PC-3 (cell line): ENCODE measurements at regions of chr14 and their contacts with region 1.

Region 1: GRCh38 chr14:63770187-63770807 is 42.4 kb upstream of the SGPP1 start:
- DNase-seq: peak; percentile 79
- ATAC-seq: peak; percentile 99
- H3K4me3 ChIP-seq: no peak overlapping the region
- H3K27ac ChIP-seq: no peak overlapping the region
- H3K4me1 ChIP-seq: no peaks in the 10 kb centered on the region
- H3K27me3 ChIP-seq: no peaks in the 10 kb centered on the region
- CTCF ChIP-seq: peak; percentile 90

Region 2: GRCh38 chr14:63388763-63389431 is 381.4 kb before region 1 on chr14:
- CTCF ChIA-PET with region 1: interaction called, 4 read pairs
- POLR2A ChIA-PET with region 1: no interaction called
- intact Hi-C with region 1: loop called (anchors 1 kb)
- DNase-seq: peak; percentile 78
- ATAC-seq: peak; percentile 96
- H3K4me3 ChIP-seq: no peak overlapping the region
- H3K27ac ChIP-seq: no peak overlapping the region
- H3K4me1 ChIP-seq: no peaks in the 10 kb centered on the region
- H3K27me3 ChIP-seq: no peaks in the 10 kb centered on the region
- CTCF ChIP-seq: peak; percentile 98

Region 3: DNA sequence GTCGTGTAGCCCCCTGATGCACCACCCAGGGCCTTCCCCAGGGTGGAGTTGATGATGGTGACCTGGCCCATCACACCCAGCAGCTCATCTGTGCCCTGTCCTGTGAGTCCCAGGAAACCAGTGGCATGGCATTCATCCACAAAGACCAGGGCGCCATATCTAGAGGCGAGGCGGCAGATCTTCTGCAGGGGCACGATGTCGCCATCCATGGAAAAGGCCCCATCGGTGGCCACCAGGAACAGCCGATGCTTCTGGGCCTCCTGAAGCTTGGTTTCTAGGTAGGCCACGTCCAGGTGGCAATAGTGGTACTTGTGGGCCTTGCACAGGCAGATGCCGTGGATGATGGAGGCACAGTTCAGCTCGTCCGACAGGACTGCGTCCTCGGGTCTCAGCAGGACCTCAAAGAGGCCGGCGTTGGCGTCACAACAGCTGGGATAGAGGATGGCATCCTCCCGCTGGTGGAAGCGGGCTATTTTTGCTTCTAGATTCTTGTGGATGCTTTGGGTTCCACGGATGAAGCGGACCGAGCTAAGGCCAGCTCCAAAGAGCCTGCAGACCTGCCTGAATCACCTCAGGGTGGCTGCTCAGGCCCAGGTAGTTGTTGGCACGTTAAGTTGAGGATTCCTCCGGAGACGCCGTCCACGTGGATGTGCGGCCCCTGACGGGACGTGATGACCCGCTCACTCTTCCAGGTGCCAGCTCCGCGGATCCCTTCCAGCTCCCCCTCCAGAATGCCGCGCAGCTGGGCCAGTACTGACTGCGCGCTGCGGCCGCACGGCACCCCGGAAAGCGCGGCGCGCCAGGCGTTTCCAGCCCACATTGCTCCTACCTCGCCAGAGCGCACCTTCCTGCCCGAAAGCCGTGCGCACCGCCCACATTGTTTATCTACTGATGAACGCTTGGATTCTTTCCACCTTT is 175.6 kb before region 1 on chr14:
- CTCF ChIA-PET with region 1: no interaction called
- POLR2A ChIA-PET with region 1: interaction called, 10 read pairs
- intact Hi-C with region 1: no loop called
- DNase-seq: no peak
- ATAC-seq: no peak
- H3K4me3 ChIP-seq: no peak overlapping the region
- H3K27ac ChIP-seq: no peak overlapping the region
- H3K4me1 ChIP-seq: no peaks in the 10 kb centered on the region
- H3K27me3 ChIP-seq: no peaks in the 10 kb centered on the region
- CTCF ChIP-seq: no peak

Region 4: DNA sequence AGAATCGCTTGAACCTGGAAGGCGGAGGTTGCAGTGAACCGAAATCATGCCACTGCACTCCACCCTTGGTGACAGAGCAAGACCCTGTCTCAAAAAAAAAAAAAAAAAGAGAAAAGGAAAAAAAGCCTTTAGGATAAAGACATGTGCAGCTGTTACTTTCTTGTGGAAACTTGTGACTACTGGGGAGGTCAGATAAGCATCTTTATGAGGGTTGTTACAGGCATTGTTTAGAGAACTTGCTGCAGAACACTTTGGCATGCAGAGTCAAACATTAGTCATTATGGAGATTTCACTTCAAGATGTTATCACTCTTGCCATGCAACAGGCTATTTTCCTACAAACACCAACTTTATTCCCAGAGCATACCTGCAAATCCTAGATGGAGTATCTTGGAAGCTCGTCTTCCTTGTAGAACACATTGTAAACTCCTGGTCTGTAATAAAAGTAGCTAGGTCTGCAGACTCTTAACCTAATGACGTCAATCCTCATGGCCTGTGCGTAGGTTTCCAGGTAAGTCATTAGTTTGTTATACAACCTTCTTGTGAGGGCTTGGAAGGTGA is 92.4 kb before region 1 on chr14:
- CTCF ChIA-PET with region 1: interaction called, 16 read pairs
- POLR2A ChIA-PET with region 1: no interaction called
- intact Hi-C with region 1: loop called (anchors 1 kb)
- DNase-seq: peak; percentile 96
- ATAC-seq: peak; percentile 92
- H3K4me3 ChIP-seq: peak overlapping the region; percentile 28
- H3K27ac ChIP-seq: peak overlapping the region; percentile 94
- H3K4me1 ChIP-seq: peaks cover 23% of the 10 kb centered on the region
- H3K27me3 ChIP-seq: no peaks in the 10 kb centered on the region
- CTCF ChIP-seq: no peak

Region 5: GRCh38 chr14:63752513-63753169 is 17.7 kb before region 1 on chr14:
- CTCF ChIA-PET with region 1: interaction called, 8 read pairs
- POLR2A ChIA-PET with region 1: interaction called, 9 read pairs
- intact Hi-C with region 1: loop called (anchors 2 kb)
- DNase-seq: peak; percentile 96
- ATAC-seq: peak; percentile 96
- H3K4me3 ChIP-seq: peak overlapping the region; percentile 53
- H3K27ac ChIP-seq: peak overlapping the region; percentile 93
- H3K4me1 ChIP-seq: peaks cover 10% of the 10 kb centered on the region
- H3K27me3 ChIP-seq: no peaks in the 10 kb centered on the region
- CTCF ChIP-seq: no peak